ENCODE measurements at regions of chr18 and their contacts with region 1.

Region 1: DNA sequence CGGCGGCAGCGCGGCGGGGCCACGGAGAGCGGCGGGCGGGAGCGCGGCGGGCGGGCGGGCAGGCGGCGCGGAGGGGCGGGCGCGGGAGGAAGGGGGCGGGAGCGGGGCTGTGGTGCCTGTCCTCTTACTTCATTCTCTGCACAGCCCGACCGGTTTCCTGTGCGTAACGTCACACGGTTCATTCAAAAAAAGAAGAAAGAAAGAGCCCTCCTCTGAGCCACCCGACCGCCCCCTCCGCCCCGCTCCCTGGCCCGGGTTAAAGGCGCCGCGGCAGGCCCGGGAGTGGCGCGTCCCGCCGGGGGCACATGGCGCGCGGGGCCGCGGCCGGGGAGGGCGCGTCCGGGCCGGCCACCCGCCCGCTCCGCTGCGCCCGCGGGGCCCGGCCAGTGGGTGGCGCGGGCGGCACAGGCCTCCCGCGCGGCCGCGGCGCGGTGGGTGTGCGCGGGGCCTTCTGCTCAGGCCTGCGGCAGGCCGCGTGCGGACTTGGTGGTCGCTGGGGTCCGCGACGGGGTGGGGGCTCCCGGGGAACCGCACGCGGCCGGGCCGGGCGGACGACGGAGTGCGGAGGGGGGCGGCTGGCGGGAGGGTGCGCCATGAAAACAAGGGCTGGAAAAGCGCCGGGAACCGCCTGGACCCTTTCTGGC is 599 bp upstream of the BCL2 start:
- DNase-seq: peak; percentile 90
- ATAC-seq: peak; percentile 70
- H3K4me3 Mint-ChIP-seq: peak overlapping the region; percentile 98
- H3K27ac Mint-ChIP-seq: peak overlapping the region; percentile 95
- H3K4me1 Mint-ChIP-seq: peaks cover 23% of the 10 kb centered on the region
- H3K27me3 Mint-ChIP-seq: no peaks in the 10 kb centered on the region

Region 2: DNA sequence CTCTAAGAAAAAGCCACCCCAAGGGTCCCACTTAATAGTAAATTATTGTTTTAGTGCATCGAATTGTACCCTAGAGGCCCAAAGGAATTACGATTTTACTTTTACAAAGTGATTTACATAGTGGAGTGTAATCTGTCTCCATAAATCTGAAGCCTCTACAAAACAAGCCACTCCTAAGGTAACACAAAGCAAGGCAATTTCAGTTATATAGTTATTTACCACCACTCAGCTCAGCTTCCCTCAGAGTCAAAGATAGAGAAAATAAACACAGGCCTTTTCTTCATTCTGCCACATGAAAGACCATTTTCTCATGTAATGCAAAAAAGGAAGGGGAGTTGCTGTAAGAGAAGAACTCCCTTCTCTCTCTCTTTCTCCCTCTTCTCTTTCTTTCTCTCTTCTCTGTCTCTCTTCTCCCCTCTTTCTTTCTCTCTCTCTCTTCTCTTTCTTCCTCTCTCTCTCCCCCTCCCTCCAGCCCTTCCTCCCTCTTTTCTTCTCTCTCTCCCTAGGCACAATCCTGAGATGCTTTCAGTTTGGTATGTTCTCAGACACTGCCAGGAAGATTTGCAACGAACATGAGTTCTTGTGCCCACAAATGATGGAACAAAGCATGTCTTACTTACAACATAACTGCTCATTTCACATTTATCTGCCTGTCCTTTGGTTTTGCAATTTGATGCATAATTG is 265.1 kb before region 1 on chr18:
- CTCF ChIA-PET with region 1: no interaction called
- POLR2A ChIA-PET with region 1: no interaction called
- intact Hi-C with region 1: no loop called
- DNase-seq: no peak
- ATAC-seq: no peak
- H3K4me3 Mint-ChIP-seq: no peak overlapping the region
- H3K27ac Mint-ChIP-seq: no peak overlapping the region
- H3K4me1 Mint-ChIP-seq: peaks cover 10% of the 10 kb centered on the region
- H3K27me3 Mint-ChIP-seq: no peaks in the 10 kb centered on the region

Region 3: DNA sequence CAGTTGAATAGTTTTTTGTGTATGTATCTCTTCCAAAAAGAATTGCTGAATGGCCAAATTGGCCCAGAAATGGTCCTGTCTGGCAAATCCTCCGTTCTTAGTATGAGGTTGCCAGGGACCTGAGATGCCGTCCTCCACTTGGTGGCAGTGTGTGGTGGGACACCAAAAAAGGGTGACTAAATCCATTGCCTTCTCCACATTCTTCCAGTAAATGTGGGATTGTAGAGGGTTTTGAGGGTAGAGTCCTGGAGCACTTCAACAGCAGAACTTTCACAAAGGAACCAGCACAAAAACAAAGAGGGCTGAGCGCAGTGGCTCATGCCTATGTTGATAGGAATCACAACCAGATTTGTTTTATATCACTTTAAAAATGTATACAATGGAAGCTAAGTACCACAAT is 200.5 kb before region 1 on chr18:
- CTCF ChIA-PET with region 1: interaction called, 7 read pairs
- POLR2A ChIA-PET with region 1: no interaction called
- intact Hi-C with region 1: loop called in 1 of 2 experiments (anchors 1 kb)
- DNase-seq: peak; percentile 59
- ATAC-seq: peak; percentile 69
- H3K4me3 Mint-ChIP-seq: no peak overlapping the region
- H3K27ac Mint-ChIP-seq: no peak overlapping the region
- H3K4me1 Mint-ChIP-seq: peaks cover 4% of the 10 kb centered on the region
- H3K27me3 Mint-ChIP-seq: no peaks in the 10 kb centered on the region

Region 4: DNA sequence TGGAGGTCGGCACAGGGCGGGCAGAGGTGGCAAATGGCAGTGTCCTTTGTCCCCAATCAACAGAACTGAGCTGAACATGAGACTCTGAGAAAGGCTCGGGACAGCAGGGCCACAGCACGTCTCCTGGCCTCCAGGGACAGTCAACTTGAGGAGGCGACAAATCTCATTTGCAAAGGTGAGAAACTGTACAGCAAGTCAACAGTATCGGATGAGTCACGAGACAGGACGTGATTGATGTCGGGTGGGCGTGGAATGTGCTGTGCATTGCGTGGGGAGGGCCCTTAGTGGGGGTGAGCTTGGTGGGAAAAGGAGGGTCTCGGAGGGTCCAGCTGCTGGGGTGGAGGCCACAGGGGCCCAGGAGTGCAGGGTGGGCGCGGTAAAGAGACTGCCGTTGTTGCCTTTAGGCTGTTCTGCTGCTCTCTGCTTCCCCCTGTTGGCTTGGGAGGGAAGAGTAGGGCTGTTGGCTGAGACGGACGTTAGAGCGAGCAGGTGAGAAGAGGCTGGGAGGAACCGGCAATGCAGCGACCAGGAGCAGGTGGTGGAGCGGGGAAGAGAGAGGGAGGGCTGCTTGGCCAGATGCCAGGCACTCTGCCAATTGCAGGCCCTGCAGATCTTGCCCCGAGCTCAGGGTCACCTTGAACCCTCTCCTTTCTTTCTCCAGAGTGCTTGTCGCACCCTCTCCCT is 164.9 kb before region 1 on chr18:
- CTCF ChIA-PET with region 1: interaction called, 33 read pairs
- POLR2A ChIA-PET with region 1: interaction called, 7 read pairs
- intact Hi-C with region 1: loop called (anchors 1 kb)
- DNase-seq: peak; percentile 89
- ATAC-seq: peak; percentile 66
- H3K4me3 Mint-ChIP-seq: peak overlapping the region; percentile 73
- H3K27ac Mint-ChIP-seq: peak overlapping the region; percentile 95
- H3K4me1 Mint-ChIP-seq: peaks cover 99% of the 10 kb centered on the region
- H3K27me3 Mint-ChIP-seq: no peaks in the 10 kb centered on the region

Region 5: GRCh38 chr18:63211633-63212032 is 108.5 kb before region 1 on chr18:
- CTCF ChIA-PET with region 1: interaction called, 12 read pairs
- POLR2A ChIA-PET with region 1: interaction called, 4 read pairs
- intact Hi-C with region 1: loop called (anchors 1 to 2 kb)
- DNase-seq: no peak
- ATAC-seq: no peak
- H3K4me3 Mint-ChIP-seq: no peak overlapping the region
- H3K27ac Mint-ChIP-seq: peak overlapping the region; percentile 100
- H3K4me1 Mint-ChIP-seq: peaks cover 98% of the 10 kb centered on the region
- H3K27me3 Mint-ChIP-seq: no peaks in the 10 kb centered on the region

Region 6: GRCh38 chr18:63282793-63283192 is 37.4 kb before region 1 on chr18:
- CTCF ChIA-PET with region 1: interaction called, 10 read pairs
- POLR2A ChIA-PET with region 1: no interaction called
- intact Hi-C with region 1: no loop called
- DNase-seq: no peak
- ATAC-seq: no peak
- H3K4me3 Mint-ChIP-seq: no peak overlapping the region
- H3K27ac Mint-ChIP-seq: no peak overlapping the region
- H3K4me1 Mint-ChIP-seq: peaks cover 62% of the 10 kb centered on the region
- H3K27me3 Mint-ChIP-seq: no peaks in the 10 kb centered on the region

Region 7: GRCh38 chr18:63367053-63367953 is 47.1 kb after region 1 on chr18 and contains the start of gene KDSR:
- CTCF ChIA-PET with region 1: interaction called, 6 read pairs
- POLR2A ChIA-PET with region 1: interaction called, 4 read pairs
- intact Hi-C with region 1: loop called in 1 of 2 experiments (anchors 1 kb)
- DNase-seq: peak; percentile 92
- ATAC-seq: peak; percentile 85
- H3K4me3 Mint-ChIP-seq: peak within 1 kb of the TSS; percentile 96
- H3K27ac Mint-ChIP-seq: peak within 1 kb of the TSS; percentile 85
- H3K4me1 Mint-ChIP-seq: peaks cover 36% of the 10 kb centered on the region
- H3K27me3 Mint-ChIP-seq: no peaks in the 10 kb centered on the region
- total RNA-seq, gene KDSR: 72.6 to 78.6 TPM